ENCODE measurements at regions of chr4 and their contacts with region 1.

Region 1: DNA sequence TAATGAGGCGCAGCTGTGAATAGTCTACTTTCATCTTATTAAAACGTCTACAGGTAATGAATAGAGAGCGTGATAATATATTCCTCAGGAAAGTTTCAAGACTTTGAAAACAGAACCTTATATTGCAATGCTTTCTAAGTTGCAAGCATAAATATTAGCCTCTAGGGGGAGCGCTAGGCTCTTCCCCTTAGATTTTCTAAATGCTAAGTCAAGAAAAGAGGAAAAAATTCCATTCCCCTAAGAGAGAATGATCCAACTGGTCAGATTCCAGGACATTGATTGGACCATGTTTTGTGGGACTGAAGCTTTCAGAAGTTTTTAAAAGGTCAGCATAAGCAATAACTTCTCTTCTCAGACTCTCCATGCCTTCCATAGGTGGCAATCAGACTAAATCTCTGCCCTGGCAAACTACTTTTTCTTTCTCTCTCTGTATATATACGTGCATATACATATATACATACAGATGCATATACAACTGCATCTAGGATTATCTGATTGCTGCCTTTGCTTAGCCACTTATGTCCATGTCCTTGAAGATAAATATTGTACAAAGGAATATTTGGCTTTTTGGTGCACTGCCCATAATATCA is 492.9 kb downstream of the INPP4B start:
- DNase-seq: no peak
- H3K4me3 Mint-ChIP-seq: peak overlapping the region; percentile 55
- H3K27ac Mint-ChIP-seq: peak overlapping the region; percentile 87
- H3K4me1 Mint-ChIP-seq: peaks cover 95% of the 10 kb centered on the region
- H3K27me3 Mint-ChIP-seq: no peaks in the 10 kb centered on the region

Region 2: GRCh38 chr4:141898346-141898745 is 454.9 kb before region 1 on chr4:
- CTCF ChIA-PET with region 1: no interaction called
- POLR2A ChIA-PET with region 1: no interaction called
- intact Hi-C with region 1: no loop called
- DNase-seq: no peak
- H3K4me3 Mint-ChIP-seq: no peak overlapping the region
- H3K27ac Mint-ChIP-seq: no peak overlapping the region
- H3K4me1 Mint-ChIP-seq: no peaks in the 10 kb centered on the region
- H3K27me3 Mint-ChIP-seq: no peaks in the 10 kb centered on the region

Region 3: DNA sequence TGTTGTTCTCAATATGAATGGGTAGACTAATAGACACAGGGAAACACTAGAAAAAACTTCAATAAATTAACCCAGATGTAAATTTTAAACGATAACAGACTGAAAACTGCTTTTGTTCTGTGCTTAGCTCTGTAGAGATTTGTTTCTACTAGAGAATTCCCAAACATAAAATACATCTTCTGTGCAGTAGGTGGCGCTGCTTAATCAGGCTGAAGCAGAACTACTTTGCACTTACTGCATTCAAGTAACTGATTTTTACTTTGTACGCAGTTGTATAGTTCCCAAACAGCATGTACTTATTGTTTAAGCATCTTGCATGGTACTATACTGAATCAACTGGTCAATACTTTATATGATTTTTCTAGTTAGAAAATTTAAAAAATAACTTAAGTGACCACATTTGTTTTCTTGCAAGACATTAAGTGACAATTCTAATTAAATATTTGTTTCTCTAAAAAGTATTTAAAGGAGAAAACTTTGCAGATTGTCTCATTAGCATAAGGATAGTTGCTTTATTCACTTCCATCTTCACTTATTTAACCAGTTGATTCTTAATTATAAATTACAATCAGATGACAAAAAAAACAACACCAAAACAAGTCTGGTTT is 226.2 kb before region 1 on chr4:
- CTCF ChIA-PET with region 1: interaction called, 3 read pairs
- POLR2A ChIA-PET with region 1: no interaction called
- intact Hi-C with region 1: loop called (anchors 2 kb)
- DNase-seq: peak; percentile 68
- H3K4me3 Mint-ChIP-seq: no peak overlapping the region
- H3K27ac Mint-ChIP-seq: no peak overlapping the region
- H3K4me1 Mint-ChIP-seq: peaks cover 26% of the 10 kb centered on the region
- H3K27me3 Mint-ChIP-seq: no peaks in the 10 kb centered on the region

Region 4: GRCh38 chr4:142181021-142181420 is 172.2 kb before region 1 on chr4:
- CTCF ChIA-PET with region 1: no interaction called
- POLR2A ChIA-PET with region 1: no interaction called
- intact Hi-C with region 1: no loop called
- DNase-seq: no peak
- H3K4me3 Mint-ChIP-seq: no peak overlapping the region
- H3K27ac Mint-ChIP-seq: no peak overlapping the region
- H3K4me1 Mint-ChIP-seq: no peaks in the 10 kb centered on the region
- H3K27me3 Mint-ChIP-seq: no peaks in the 10 kb centered on the region

Region 5: GRCh38 chr4:142293536-142293935 is 59.7 kb before region 1 on chr4:
- CTCF ChIA-PET with region 1: interaction called, 11 read pairs
- POLR2A ChIA-PET with region 1: no interaction called
- intact Hi-C with region 1: no loop called
- DNase-seq: no peak
- H3K4me3 Mint-ChIP-seq: no peak overlapping the region
- H3K27ac Mint-ChIP-seq: peak overlapping the region; percentile 32
- H3K4me1 Mint-ChIP-seq: peaks cover 76% of the 10 kb centered on the region
- H3K27me3 Mint-ChIP-seq: no peaks in the 10 kb centered on the region

Region 6: DNA sequence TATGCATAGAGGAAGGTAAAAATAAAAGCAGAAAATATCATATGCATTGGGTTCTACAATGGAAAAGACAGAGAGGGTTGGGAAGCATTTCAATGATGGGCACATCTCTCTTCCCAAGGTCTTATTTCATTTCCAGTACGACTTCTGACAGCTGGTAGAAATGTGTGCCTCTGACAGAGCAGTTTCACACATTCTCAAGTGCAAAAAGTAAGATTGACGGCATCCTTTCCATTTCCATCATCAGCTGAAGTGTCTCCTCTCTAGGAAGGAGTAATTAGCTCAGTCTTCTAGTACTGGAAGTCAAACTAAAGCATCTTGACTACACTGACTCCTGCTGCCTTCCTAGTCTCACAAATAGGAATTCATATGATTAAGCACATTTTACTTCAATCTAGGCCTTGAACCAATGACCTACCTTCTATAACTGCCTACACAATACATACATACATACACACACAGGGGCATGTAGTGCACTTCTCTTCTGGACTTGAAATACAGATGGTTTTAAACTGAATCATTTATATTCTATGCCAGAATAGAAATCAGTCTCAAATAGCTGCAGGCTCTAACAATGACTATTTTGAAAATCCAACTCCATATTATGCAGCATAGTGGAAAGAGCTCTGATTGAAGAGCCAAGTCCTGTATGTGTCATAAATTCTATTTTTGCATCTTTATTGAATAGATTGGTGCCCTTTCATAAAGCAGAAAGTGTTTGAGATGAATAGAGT is 19.5 kb after region 1 on chr4:
- CTCF ChIA-PET with region 1: interaction called, 19 read pairs
- POLR2A ChIA-PET with region 1: interaction called, 6 read pairs
- intact Hi-C with region 1: loop called (anchors 1 kb)
- DNase-seq: no peak
- H3K4me3 Mint-ChIP-seq: peak overlapping the region; percentile 61
- H3K27ac Mint-ChIP-seq: peak overlapping the region; percentile 89
- H3K4me1 Mint-ChIP-seq: peaks cover 71% of the 10 kb centered on the region
- H3K27me3 Mint-ChIP-seq: no peaks in the 10 kb centered on the region

Region 7: GRCh38 chr4:142434519-142435239 is 81.4 kb after region 1 on chr4:
- CTCF ChIA-PET with region 1: no interaction called
- POLR2A ChIA-PET with region 1: no interaction called
- intact Hi-C with region 1: loop called (anchors 1 kb)
- DNase-seq: no peak
- H3K4me3 Mint-ChIP-seq: no peak overlapping the region
- H3K27ac Mint-ChIP-seq: peak overlapping the region; percentile 47
- H3K4me1 Mint-ChIP-seq: peaks cover 33% of the 10 kb centered on the region
- H3K27me3 Mint-ChIP-seq: no peaks in the 10 kb centered on the region

Region 8: DNA sequence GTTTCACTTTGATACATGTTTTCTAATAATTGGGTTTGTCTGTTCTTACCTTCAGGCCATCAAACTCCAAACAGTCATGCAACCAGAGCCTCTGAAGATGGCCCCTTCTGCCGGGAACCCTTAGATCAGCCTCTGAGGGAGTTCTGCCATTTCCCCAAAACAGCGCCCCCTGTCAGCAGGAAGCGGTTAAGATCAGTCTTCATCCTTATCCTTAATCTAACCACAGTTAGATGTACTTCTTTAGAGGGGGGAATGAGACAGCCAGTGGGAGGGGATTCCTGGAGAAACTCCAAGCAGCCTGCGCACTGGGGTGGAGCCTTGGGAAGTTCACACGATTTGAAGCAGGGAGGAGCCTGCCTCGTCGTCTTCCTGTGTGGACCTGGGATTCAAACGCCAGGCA is 307.5 kb after region 1 on chr4:
- CTCF ChIA-PET with region 1: no interaction called
- POLR2A ChIA-PET with region 1: no interaction called
- intact Hi-C with region 1: no loop called
- DNase-seq: no peak
- H3K4me3 Mint-ChIP-seq: no peak overlapping the region
- H3K27ac Mint-ChIP-seq: no peak overlapping the region
- H3K4me1 Mint-ChIP-seq: no peaks in the 10 kb centered on the region
- H3K27me3 Mint-ChIP-seq: no peaks in the 10 kb centered on the region

Region 9: GRCh38 chr4:142824368-142824767 is 471.1 kb after region 1 on chr4:
- CTCF ChIA-PET with region 1: no interaction called
- POLR2A ChIA-PET with region 1: no interaction called
- intact Hi-C with region 1: loop called (anchors 5 kb)
- DNase-seq: no peak
- H3K4me3 Mint-ChIP-seq: no peak overlapping the region
- H3K27ac Mint-ChIP-seq: no peak overlapping the region
- H3K4me1 Mint-ChIP-seq: peaks cover 15% of the 10 kb centered on the region
- H3K27me3 Mint-ChIP-seq: peaks cover 14% of the 10 kb centered on the region

Region 10: GRCh38 chr4:142846729-142847596 is 493.7 kb after region 1 on chr4:
- CTCF ChIA-PET with region 1: interaction called, 3 read pairs
- POLR2A ChIA-PET with region 1: no interaction called
- intact Hi-C with region 1: loop called (anchors 2 kb)
- DNase-seq: peak; percentile 87
- H3K4me3 Mint-ChIP-seq: peak overlapping the region; percentile 87
- H3K27ac Mint-ChIP-seq: peak overlapping the region; percentile 43
- H3K4me1 Mint-ChIP-seq: peaks cover 19% of the 10 kb centered on the region
- H3K27me3 Mint-ChIP-seq: peaks cover 7% of the 10 kb centered on the region